ENCODE measurements at regions of chr1 and their contacts with region 1.

Region 1: GRCh38 chr1:59057211-59057694 is 239.6 kb upstream of the FGGY start:
- DNase-seq: peak; percentile 93
- ATAC-seq: peak; percentile 93

Region 2: GRCh38 chr1:58903514-58904298 is 153.5 kb before region 1 on chr1:
- intact Hi-C with region 1: loop called (anchors 5 kb)
- DNase-seq: peak; percentile 98
- ATAC-seq: peak; percentile 96

Region 3: DNA sequence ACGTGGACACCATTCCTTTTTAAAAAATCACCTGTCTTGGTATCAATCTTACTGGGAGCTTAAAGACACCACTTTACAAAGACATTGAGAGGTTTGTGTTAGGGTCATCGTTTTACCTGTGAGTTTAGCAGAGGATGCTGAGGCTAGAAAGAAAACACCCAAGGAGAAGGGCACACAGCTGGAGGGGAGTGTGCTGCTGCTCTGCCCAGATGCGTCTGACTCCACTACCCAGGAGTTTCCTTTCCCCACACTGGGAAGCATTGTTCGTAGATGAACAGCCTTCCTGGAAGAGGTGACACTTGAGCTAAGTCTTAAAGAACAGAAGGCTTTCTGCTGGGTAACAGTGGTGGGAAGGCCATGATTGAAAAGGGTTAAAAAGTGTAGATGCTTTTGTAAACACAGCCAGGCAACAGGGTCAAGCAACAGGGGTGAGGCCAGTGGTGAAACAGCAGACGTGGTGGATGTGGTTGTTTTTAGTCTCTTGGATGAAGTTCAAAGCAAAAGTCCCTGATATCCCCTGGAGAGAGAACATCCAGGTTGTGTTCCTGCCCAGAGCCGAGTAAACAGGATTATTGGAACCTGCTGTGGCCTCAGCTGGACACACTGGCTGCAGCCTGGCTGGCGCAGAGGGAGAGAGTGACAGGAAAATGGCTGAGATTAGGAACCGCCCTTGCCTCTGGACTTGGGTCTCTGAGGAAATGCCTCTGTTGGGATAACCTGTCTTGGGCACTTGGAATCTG is 74.8 kb before region 1 on chr1:
- intact Hi-C with region 1: loop called (anchors 5 kb)
- DNase-seq: peak; percentile 70
- ATAC-seq: peak; percentile 87

Region 4: DNA sequence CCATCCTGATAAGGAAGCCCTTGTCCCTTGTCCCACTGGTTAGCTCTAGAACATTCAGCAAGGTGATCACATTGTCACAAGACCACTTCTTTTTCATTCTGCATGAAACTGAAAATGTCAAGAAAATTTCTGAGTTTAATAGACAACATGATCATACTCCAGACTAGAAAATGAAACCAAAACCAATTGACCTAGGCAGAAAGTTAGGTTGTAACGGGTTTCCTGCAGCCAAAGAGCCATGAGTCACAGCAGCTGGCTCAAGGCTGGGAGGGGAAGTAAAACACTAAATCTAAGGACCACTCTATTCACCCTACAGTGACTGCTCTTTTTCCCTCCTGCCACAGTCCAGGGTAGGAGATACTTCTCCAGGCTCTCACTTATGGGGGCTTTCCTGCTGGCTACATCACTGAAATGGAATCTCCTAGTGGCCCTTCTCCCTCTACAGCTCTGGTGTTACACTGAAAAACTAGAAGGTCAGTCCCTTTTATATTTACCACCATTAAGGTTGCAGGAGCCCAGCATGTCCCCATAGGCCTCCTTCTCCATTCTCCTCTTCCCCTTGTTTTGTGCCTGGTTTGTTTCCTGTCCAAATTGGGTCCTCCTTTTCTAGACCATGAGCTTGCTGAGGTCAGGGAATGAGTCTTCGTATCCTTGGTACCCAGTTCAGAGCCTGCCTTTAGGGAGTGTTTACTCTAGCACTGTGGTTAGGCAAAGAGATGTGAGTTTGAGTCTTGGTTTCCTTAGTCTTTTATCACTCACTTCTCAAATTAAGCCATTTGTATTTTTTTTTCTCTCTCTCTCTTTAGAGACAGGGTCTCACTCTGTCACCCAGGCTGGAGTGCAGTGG is 36.9 kb before region 1 on chr1:
- intact Hi-C with region 1: loop called (anchors 5 kb)
- DNase-seq: no peak
- ATAC-seq: peak; percentile 62

Region 5: GRCh38 chr1:59076612-59077011 is 19.4 kb after region 1 on chr1:
- intact Hi-C with region 1: no loop called
- DNase-seq: no peak
- ATAC-seq: no peak

Region 6: GRCh38 chr1:59128784-59129227 is 71.6 kb after region 1 on chr1:
- intact Hi-C with region 1: no loop called
- DNase-seq: no peak
- ATAC-seq: no peak

Region 7: GRCh38 chr1:59143133-59143487 is 85.9 kb after region 1 on chr1:
- intact Hi-C with region 1: loop called (anchors 2 kb)
- DNase-seq: no peak
- ATAC-seq: no peak

Region 8: DNA sequence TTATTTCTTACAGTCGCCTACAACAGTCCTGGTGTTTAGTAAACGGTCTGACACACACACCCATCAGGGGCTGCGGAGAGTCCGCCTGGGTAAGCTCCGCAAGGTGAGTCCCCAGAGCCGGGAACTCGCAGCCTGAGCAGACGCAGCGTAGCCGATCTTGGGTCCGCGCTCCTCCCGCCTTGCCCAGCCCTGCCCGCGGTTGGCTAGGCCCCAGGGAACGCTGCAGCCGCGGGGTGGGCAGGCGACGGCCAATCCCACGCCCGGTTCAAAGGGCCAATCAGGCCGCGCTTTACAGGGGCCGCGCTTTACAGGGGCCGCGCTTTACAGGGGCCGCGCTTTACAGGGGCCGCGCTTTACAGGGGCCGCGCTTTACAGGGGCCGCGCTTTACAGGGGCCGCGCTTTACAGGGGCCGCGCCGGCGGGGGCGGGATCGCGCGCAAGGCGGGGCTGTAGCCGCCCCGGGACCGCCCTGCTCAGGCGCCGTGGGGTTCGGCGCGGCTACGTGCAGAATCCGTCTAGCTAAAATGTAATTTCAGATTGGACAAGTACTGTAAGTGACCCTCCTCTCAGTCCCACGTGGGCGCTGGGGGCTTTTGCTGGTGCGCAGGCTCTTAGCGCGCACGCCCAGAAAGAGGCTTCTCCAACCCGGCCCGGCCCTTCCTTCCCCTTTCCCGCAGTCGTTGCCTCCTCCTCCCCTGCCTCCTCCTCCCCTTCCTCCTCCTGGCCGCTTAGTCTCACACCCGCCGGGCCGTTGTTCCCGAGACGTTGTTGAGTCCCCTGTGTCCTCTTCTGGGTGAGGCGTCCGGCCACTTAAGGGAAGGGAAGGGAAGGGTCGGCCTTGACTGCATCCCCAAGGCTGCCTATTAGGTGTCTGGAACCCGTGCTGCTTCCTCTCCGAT is 239.4 kb after region 1 on chr1 and contains the start of gene FGGY:
- intact Hi-C with region 1: loop called (anchors 5 kb)
- DNase-seq: peak; percentile 99
- ATAC-seq: peak; percentile 96
- total RNA-seq, gene FGGY: 28.5 TPM

Region 9: DNA sequence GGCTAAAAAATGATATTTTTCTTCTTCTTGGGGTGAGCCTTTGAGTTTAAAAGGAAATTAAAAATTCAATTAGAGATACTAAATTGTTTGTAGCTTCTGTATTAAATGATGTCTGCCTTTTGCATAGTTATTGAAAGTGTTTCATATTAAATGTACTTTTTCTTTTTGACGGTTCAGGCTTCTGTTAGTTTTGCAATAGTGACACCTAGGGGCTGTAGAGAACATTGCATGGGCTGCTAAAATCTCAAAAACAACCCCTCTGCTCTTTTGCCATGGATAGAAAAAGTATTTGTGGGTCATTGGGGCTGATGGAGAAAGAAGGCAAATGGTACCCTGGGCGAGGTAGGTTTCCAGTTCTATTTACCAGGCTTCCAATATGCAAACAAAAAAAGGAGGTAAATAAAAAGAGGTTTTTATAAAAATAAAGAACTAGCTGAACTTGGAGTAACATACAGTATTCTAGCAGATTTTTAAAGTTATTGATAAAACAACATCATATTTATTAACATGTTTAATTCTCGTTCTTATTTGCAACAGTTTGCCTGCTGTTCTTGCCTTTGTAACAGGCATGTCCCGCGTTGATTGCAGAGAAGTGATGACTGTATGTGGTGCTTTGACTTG is 642.1 kb after region 1 on chr1:
- intact Hi-C with region 1: loop called (anchors 5 kb)
- DNase-seq: no peak
- ATAC-seq: no peak

Measured in Right ventricle myocardium inferior (tissue), 1 donor.